SK-N-SH (cell line): ENCODE measurements at regions of chr5 and their contacts with region 1.

Region 1: DNA sequence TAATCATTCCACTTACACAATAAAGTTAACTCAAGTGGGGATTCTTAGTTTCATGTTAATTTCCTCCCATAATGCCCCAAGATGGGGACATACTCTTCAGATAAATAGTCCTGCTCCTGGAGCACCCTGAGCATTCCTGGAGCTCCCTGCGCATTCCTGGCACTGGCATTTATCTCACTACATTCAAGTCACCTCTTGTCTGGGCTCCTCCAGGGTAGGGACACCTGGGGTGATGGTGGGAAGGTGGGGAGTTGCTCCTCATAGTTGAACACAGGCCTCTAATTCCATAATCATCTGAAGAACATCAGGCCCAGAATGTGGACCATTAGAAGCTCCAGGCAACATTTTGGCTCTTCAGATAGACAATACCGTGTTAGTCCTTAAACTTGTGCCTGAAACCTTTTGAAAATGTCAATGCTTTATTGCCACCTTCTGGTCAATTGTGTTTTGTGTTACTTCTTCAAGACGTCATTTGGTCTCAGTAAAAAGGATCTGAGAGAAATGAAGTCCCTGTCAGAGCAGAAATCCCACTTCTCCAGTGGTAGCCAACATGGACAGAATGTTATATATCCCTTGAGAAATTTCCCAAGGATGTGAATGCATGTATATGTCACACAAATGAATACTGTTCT is 14.2 kb upstream of the AGGF1 start:
- DNase-seq: no peak
- H3K4me3 ChIP-seq: no peak overlapping the region
- H3K27ac ChIP-seq: no peak overlapping the region
- H3K4me1 ChIP-seq: no peaks in the 10 kb centered on the region
- H3K27me3 ChIP-seq: 0 out of 2 replicates have a peak, but pooled peaks cover 5% of the 10 kb centered on the region
- CTCF ChIP-seq: peak; percentile 53
- EP300 ChIP-seq: no peak
- RAD21 ChIP-seq: peak; percentile 67

Region 2: GRCh38 chr5:76742583-76742982 is 273.5 kb before region 1 on chr5:
- CTCF ChIA-PET with region 1: no interaction called
- POLR2A ChIA-PET with region 1: no interaction called
- DNase-seq: no peak
- H3K4me3 ChIP-seq: no peak overlapping the region
- H3K27ac ChIP-seq: peak overlapping the region in 1 of 2 experiments; percentile 32; a peak in 2 of 4 replicates
- H3K4me1 ChIP-seq: peaks cover 5% of the 10 kb centered on the region in 2 experiments; a peak in 2 of 4 replicates
- H3K27me3 ChIP-seq: no peaks in the 10 kb centered on the region
- CTCF ChIP-seq: no peak
- EP300 ChIP-seq: no peak
- RAD21 ChIP-seq: no peak

Region 3: GRCh38 chr5:76867827-76868693 is 148.0 kb before region 1 on chr5:
- CTCF ChIA-PET with region 1: interaction called, 62 read pairs
- POLR2A ChIA-PET with region 1: no interaction called
- DNase-seq: peak; percentile 74
- H3K4me3 ChIP-seq: no peak overlapping the region
- H3K27ac ChIP-seq: no peak overlapping the region
- H3K4me1 ChIP-seq: no peaks in the 10 kb centered on the region
- H3K27me3 ChIP-seq: no peaks in the 10 kb centered on the region
- CTCF ChIP-seq: peak; percentile 91
- EP300 ChIP-seq: no peak
- RAD21 ChIP-seq: peak; percentile 95

Region 4: DNA sequence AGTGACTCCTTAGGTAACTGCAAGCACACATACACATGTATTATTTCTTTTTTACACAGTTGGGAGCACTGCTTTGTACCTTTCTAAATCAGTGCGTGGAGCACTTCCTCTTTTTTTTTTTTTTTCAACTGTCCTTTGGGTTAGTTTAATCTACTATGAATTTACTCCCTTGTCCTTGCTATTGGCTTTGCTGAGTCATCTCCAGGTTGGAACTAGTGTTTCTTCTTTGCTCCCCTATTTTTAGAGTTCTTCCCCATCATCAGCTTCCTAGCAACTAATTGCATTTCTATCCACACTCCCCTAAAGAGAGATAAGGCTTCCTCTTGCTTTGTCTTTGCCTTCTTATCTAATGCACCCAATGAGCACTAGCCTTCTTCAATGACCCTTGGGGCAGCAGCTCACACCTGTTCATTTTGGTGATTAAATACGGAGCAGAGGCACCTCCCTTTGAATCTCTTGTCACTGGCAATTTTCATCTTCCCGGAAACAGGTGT is 141.9 kb before region 1 on chr5:
- CTCF ChIA-PET with region 1: interaction called, 62 read pairs
- POLR2A ChIA-PET with region 1: no interaction called
- DNase-seq: no peak
- H3K4me3 ChIP-seq: no peak overlapping the region
- H3K27ac ChIP-seq: no peak overlapping the region
- H3K4me1 ChIP-seq: no peaks in the 10 kb centered on the region
- H3K27me3 ChIP-seq: peaks cover 7% of the 10 kb centered on the region; the same call in 1 of the 2 replicates
- CTCF ChIP-seq: no peak
- EP300 ChIP-seq: no peak
- RAD21 ChIP-seq: no peak